Common myeloid progenitor, CD34-positive (primary cell): ENCODE measurements at regions of chr4 and their contacts with region 1.

Region 1: DNA sequence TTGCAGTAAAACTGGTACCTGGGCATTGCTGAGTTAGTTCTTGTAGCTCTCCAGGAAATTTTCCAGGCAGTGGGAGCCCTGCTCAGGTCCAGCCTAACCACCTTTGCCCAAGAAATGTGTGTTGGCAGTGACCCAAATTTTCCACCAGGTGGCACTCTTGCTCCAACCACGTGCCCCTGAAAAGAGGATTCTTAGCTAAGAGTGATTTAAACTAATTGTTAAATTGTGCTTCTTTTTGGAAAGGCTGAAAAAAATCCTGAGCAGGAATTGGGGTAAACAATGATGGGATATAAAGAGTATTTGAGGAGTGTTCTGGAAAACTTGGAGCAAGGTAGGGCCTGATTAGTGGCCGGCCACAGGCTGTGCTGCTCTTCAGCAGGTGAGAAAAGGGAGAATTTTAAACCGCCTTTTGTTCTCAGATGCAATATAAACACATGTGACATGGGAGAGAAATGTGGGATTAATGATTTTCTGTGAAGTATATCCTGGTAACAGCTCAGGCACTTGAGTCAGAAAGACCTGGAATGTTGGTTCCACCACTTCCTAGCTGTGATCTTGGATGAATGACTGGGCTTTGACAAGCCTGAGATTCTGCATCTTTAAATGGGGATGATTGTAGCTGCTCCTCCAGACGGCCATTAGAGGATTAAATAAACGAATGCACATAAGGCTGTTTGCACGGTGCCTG is 219.6 kb downstream of the PTTG2 start:
- DNase-seq: peak; percentile 66 to 82 (median 71)
- H3K4me3 ChIP-seq: no peak overlapping the region
- H3K27ac ChIP-seq: no peak overlapping the region
- H3K4me1 ChIP-seq: peaks cover 28 to 45% (median 39%) of the 10 kb centered on the region in 4 experiments
- H3K27me3 ChIP-seq: no peaks in the 10 kb centered on the region

Region 2: DNA sequence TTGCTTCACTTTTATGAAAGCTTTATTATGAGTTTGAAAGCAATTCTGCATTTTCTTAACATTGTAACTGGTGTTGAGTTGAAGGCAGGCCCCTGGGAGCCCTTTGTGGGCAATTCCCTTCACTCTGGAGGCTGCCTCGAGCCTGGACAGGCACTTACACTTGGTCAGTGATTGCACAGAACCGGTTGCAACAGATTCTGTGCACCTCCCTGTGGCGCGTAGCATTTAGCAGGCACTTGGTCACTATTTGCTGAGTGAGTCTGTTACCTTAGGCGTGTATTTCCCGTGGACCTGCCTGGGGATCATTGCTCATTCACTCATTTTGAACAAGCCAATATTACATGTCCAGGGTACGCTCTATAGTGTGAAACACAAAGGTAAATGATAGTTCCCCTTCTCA is 139.2 kb before region 1 on chr4:
- CTCF ChIA-PET with region 1: no interaction called
- POLR2A ChIA-PET with region 1: no interaction called
- DNase-seq: no peak
- H3K4me3 ChIP-seq: no peak overlapping the region
- H3K27ac ChIP-seq: no peak overlapping the region
- H3K4me1 ChIP-seq: no peaks in the 10 kb centered on the region
- H3K27me3 ChIP-seq: no peaks in the 10 kb centered on the region

Region 3: GRCh38 chr4:38062088-38062893 is 117.5 kb before region 1 on chr4:
- CTCF ChIA-PET with region 1: interaction called, 25 read pairs
- POLR2A ChIA-PET with region 1: no interaction called
- DNase-seq: peak; percentile 67 to 78 (median 71)
- H3K4me3 ChIP-seq: peak overlapping the region in 5 of 7 experiments; percentile 15 to 75 (median 47)
- H3K27ac ChIP-seq: no peak overlapping the region
- H3K4me1 ChIP-seq: peaks cover 0 to 4% (median 0%) of the 10 kb centered on the region in 4 experiments
- H3K27me3 ChIP-seq: no peaks in the 10 kb centered on the region

Region 4: DNA sequence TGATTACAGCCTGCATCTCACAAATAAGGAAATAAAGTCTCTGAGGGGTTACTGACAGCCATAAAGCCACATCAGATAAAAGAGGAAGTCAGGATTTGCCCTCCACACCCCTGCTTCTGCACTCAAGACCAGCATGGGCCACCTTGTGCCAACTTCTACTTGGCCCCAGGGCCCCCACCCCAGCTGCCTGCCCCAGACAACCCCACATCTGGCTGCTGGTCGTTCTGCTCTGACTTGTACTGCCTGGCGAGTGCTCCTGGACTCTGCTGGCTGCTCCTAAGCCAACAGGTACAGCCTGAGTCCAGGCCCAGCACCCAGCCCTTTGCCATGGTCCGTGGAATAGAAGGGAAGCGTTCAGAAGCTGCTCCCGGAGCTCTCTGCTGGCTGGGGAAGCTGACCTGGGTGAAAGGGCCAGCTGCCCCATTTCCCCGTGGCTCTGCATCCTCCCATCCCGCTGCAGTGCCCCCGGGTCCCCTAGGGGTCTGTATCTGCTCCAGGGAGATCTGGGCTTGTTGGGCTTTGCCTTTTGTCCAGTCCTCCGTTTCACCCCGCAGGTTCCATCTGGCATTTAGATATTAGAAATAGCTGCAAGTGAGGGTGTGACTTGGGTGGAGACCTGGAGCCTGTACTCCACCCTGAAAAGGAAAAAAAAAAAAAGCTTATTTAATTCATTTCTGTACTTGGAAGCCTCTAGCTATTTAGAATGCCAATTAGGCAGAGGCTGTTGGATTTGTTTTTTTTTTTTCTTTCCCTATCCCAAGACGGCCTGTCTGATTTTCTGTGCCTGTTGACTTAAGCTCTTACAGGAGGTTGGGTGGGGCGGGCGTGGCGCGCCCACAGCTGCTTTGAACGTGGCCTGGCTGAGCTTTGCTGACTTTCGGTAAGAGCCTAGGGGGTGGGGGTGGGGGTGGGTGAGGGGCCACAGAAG is 24.9 kb before region 1 on chr4:
- CTCF ChIA-PET with region 1: interaction called, 27 read pairs
- POLR2A ChIA-PET with region 1: no interaction called
- DNase-seq: peak; percentile 57 to 94 (median 91)
- H3K4me3 ChIP-seq: peak overlapping the region in 2 of 7 experiments; percentile 11 to 20
- H3K27ac ChIP-seq: no peak overlapping the region
- H3K4me1 ChIP-seq: peaks cover 5 to 23% (median 18%) of the 10 kb centered on the region in 4 experiments
- H3K27me3 ChIP-seq: no peaks in the 10 kb centered on the region

Region 5: GRCh38 chr4:38675146-38676121 is 495.6 kb after region 1 on chr4:
- CTCF ChIA-PET with region 1: interaction called, 122 read pairs
- POLR2A ChIA-PET with region 1: interaction called, 3 read pairs
- DNase-seq: peak; percentile 86 to 93 (median 87)
- H3K4me3 ChIP-seq: peak overlapping the region in 5 of 7 experiments; percentile 40 to 60 (median 50)
- H3K27ac ChIP-seq: peak overlapping the region; percentile 35 to 74
- H3K4me1 ChIP-seq: peaks cover 28 to 55% (median 54%) of the 10 kb centered on the region in 4 experiments
- H3K27me3 ChIP-seq: no peaks in the 10 kb centered on the region

Region 6: DNA sequence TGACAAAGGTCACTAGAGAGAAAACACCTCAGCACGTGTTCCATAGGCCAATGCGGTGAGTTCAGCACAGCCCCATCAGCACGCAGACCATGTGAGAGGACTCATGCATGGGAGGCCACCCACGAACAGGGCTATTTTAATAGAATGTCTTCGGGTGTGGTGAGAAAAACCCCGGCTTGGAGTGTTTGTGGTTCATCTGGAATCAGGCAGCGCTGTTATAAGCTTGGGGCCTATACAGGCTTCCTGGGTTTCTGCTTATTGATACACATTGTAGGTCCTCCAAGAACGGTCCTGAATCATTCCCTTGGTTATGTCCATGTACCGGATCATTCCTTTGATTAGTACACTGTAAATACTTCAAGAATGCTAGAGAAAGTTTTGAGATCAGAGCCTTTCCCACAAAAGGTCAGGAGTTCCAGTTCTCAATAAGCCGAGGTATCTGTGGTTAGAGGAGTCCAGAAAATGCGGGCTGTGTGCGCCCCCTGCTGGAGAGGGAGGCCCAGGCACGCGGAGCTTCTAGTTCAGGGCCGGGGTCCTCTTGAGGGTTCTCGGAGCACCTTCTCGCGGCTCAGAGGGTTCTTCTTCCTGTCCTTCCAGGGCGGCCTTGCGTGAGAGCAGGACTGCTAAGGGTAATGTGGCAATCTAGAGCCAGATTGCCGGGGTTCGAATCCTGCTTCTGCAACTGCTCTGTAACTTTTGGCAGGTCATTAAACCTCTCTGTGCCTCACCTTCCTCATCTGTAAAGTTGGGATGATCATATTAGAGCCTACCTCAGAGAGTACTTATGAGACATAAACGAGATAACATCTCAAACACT is 551.2 kb after region 1 on chr4:
- CTCF ChIA-PET with region 1: interaction called, 73 read pairs
- POLR2A ChIA-PET with region 1: no interaction called
- DNase-seq: peak; percentile 71 to 81 (median 76)
- H3K4me3 ChIP-seq: no peak overlapping the region
- H3K27ac ChIP-seq: no peak overlapping the region
- H3K4me1 ChIP-seq: peaks cover 0 to 8% (median 0%) of the 10 kb centered on the region in 4 experiments
- H3K27me3 ChIP-seq: no peaks in the 10 kb centered on the region